IMR-90 (cell line): ENCODE measurements at regions of chr1 and their contacts with region 1.

Region 1: DNA sequence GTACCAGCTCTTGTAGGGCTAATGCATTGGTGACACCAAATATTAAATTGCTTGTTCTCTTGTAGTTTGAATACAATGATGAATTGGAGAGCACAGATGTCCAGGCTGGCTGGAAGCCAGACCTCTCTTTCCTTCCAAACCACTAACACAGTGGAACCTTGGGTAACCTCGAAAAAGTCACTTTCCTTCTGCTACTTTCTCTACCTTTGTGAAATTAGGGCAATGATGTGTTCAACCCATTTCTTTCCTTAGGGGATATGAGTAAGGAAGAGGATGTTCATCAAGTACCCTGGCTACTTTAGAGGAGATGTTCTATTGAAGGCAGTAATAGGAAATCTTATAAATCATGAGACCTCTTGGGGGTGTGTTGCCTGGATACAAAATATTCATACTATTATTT is 55.7 kb downstream of the XCL2 start:
- DNase-seq: peak; percentile 25
- ATAC-seq: no peak
- H3K4me3 ChIP-seq: no peak overlapping the region
- H3K27ac ChIP-seq: no peak overlapping the region
- H3K4me1 ChIP-seq: peaks cover 6% of the 10 kb centered on the region
- H3K27me3 ChIP-seq: no peaks in the 10 kb centered on the region
- CTCF ChIP-seq: no peak
- POLR2A ChIP-seq: no peak
- RAD21 ChIP-seq: no peak

Region 2: GRCh38 chr1:168476588-168477379 is 11.4 kb before region 1 on chr1:
- CTCF ChIA-PET with region 1: interaction called, 10 read pairs
- POLR2A ChIA-PET with region 1: no interaction called
- dilution Hi-C with region 1: no loop called
- in situ Hi-C with region 1: no loop called
- intact Hi-C with region 1: no loop called
- DNase-seq: no peak
- ATAC-seq: no peak
- H3K4me3 ChIP-seq: no peak overlapping the region
- H3K27ac ChIP-seq: no peak overlapping the region
- H3K4me1 ChIP-seq: no peaks in the 10 kb centered on the region
- H3K27me3 ChIP-seq: no peaks in the 10 kb centered on the region
- CTCF ChIP-seq: no peak
- POLR2A ChIP-seq: no peak
- RAD21 ChIP-seq: no peak